Cardiac septum (tissue), 1 donor: ENCODE measurements at regions of chr14 and their contacts with region 1.

Region 1: DNA sequence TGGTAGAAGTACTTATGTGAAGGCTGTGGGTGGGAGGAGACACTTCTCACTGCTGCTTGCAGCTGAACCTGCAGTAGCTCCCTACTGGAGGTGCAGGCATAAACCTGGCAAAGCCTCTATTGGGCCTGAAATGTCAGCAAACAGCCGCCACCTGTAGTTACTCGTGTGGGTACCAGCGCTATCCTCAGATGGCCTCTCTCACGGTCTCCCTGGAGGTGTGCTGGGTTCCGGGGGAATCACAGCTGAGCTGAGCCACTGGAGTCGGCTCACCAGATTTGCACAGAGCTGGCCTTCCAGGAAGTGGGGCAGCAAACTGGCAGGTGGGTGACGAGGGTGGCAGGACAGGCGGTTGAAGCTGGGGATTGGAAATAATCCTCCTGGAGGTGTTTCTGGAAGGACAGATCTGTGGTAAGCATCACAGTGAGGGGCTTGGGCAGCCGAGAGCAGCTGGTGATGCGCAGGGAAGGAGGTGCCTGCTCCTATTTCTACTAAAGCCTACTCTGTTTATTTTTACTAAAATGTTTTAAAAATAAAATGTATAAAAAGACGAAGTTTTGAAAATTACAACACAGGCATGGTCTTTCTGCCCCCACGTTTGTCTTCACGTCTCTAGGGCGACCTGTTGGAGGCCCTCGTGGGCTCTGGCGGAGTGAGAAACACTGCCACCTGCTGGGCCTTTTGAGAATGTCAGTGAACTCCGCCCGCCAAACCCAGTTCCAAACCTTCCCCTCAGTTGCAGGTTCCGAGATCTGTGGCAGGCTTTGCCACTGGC is 67.8 kb upstream of the PLEKHG3 start:
- DNase-seq: peak; percentile 82

Region 2: GRCh38 chr14:64338616-64339316 is 297.6 kb before region 1 on chr14:
- intact Hi-C with region 1: loop called (anchors 5 kb)
- DNase-seq: peak; percentile 95

Region 3: GRCh38 chr14:64438181-64438841 is 198.1 kb before region 1 on chr14:
- intact Hi-C with region 1: loop called (anchors 10 kb)
- DNase-seq: no peak

Region 4: DNA sequence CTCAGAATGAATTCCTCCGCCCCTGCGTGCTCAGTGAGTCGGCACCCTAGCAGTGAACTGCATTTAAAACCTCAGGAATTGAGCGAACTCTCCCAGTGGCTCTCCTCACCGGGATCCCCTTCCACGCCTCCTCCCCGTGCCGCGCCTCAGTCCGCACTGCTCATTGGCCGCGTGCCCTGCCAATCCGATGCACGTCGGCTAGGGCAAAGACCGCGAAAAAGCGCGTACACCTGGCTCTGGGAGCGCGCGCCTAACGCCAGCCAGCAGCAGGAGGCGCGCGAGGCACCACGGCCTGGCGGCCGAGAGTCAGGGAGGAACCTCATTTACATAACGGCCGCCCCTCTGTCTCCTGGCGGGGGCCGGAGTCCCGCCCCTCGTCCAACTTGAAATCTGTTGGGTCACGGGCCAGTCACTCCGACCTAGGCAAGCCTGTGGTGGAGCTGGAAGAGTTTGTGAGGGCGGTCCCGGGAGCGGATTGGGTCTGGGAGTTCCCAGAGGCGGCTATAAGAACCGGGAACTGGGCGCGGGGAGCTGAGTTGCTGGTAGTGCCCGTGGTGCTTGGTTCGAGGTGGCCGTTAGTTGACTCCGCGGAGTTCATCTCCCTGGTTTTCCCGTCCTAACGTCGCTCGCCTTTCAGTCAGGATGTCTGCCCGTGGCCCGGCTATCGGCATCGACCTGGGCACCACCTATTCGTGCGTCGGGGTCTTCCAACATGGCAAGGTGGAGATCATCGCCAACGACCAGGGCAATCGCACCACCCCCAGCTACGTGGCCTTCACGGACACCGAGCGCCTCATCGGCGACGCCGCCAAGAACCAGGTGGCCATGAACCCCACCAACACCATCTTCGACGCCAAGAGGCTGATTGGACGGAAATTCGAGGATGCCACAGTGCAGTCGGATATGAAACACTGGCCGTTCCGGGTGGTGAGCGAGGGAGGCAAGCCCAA is 95.9 kb before region 1 on chr14 and contains the start of gene HSPA2:
- intact Hi-C with region 1: loop called (anchors 1 kb)
- DNase-seq: peak; percentile 99
- total RNA-seq, gene HSPA2: 74.9 TPM

Region 5: DNA sequence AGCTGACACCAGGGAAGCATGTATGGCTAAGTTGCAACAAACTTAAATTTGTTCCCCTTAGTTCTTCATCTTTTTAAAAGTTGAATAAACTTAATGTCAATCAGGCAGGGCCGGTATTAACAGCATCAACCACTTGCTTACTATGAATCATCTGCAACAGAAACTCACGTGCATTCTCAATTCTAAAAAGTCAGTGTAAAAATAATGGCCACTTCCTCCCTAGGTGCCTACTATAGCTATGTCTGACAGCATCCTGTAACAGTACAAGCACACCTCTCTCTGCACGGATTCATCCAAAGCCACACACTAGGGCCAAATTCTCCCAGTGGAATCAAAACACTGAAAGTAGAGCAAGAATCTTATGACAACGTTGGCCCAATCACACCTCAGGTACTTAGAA is 38.0 kb before region 1 on chr14:
- intact Hi-C with region 1: no loop called
- DNase-seq: no peak